ENCODE measurements at regions of chr14 and their contacts with region 1.

Region 1: DNA sequence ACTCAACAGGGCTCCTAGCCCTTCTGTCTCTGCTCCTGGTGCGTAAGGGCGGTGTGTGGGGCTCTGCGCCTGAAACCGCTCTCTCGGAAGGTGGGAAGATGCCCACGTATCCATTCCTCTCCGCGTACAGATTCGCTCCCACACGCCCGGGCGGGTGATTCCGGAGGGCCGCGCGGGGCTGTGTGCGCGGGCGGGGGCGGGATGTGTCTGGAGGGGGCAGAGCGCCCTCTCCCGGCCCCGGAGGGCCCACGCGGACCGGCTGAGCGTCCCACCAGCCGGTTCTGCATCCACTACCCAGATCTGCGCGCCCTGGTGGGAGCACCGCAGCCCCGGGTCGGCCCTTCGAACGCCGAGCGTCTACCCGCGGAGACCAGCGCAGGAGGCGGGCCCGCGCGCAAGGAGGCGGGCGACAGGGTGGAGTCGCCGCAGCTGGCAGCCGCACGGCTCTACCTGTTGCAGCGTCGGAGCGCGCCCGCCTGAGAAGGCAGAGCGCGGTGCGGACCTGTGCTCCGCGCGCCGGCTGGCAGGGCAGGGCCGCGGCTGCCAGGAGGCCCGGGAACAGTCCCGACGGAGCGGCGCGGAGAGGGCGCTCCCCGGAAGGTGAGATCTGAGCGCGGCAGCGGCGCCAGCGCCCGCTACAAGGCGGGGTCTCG is 1.4 kb upstream of the KCNK13 start:
- DNase-seq: peak; percentile 72
- ATAC-seq: peak; percentile 90

Region 2: GRCh38 chr14:89973234-89973823 is 87.1 kb before region 1 on chr14:
- intact Hi-C with region 1: loop called (anchors 2 kb)
- DNase-seq: peak; percentile 73
- ATAC-seq: peak; percentile 81

Region 3: DNA sequence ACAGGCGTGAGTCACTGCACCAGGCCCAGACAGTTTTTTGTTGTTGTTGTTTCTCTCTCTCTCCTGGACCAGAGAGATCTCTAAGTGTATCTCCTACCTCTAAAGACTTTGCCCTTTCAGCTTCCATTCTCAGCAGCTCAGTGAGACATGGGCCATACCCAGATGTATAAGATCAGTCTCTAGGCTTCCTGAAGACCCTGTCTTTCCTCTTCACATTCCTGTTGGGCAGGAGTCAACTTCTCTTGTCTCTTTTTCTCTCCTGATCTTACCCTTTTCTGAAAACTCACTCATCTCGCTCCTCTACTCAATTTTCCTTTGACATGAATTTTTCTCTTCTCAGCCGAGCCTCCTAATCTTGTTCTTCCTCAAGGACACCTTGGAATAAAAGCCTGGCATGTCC is 43.4 kb after region 1 on chr14:
- intact Hi-C with region 1: loop called (anchors 5 kb)
- DNase-seq: no peak
- ATAC-seq: no peak

Region 4: GRCh38 chr14:90177539-90178189 is 117.2 kb after region 1 on chr14:
- intact Hi-C with region 1: loop called (anchors 5 kb)
- DNase-seq: no peak
- ATAC-seq: no peak

Region 5: GRCh38 chr14:90235179-90235976 is 174.9 kb after region 1 on chr14:
- intact Hi-C with region 1: loop called (anchors 2 kb)
- DNase-seq: peak; percentile 87
- ATAC-seq: peak; percentile 84

Measured in Right ventricle myocardium inferior (tissue), 1 donor.